Transverse colon (tissue), 4 donors: ENCODE measurements at regions of chr6 and their contacts with region 1.

Region 1: GRCh38 chr6:145373841-145374240 is 361.5 kb downstream of the EPM2A start:
- DNase-seq: no peak
- H3K4me3 ChIP-seq: no peak overlapping the region
- H3K27ac ChIP-seq: no peak overlapping the region
- H3K4me1 ChIP-seq: no peaks in the 10 kb centered on the region
- H3K27me3 ChIP-seq: no peaks in the 10 kb centered on the region
- CTCF ChIP-seq: no peak
- EP300 ChIP-seq: no peak
- POLR2A ChIP-seq: no peak

Region 2: GRCh38 chr6:145423922-145424321 is 50.1 kb after region 1 on chr6:
- in situ Hi-C with region 1: no loop called
- intact Hi-C with region 1: loop called (anchors 2 kb)
- DNase-seq: no peak
- H3K4me3 ChIP-seq: no peak overlapping the region
- H3K27ac ChIP-seq: no peak overlapping the region
- H3K4me1 ChIP-seq: no peaks in the 10 kb centered on the region
- H3K27me3 ChIP-seq: no peaks in the 10 kb centered on the region
- CTCF ChIP-seq: no peak
- EP300 ChIP-seq: no peak
- POLR2A ChIP-seq: no peak